Activated CD8-positive, alpha-beta T cell treated with anti-CD3 and anti-CD28 coated beads, Interleukin-2, amount 10 ng/mL, durations not matched to agents 7 days and 5 days (primary cell): ENCODE measurements at regions of chr2 and their contacts with region 1.

Region 1: GRCh38 chr2:238263204-238264071 is 23.6 kb upstream of the HES6 start:
- DNase-seq: peak; percentile 85
- ATAC-seq: peak; percentile 81
- H3K4me3 Mint-ChIP-seq: no peak overlapping the region
- H3K27ac Mint-ChIP-seq: no peak overlapping the region
- H3K4me1 Mint-ChIP-seq: peaks cover 5% of the 10 kb centered on the region
- H3K27me3 Mint-ChIP-seq: no peaks in the 10 kb centered on the region

Region 2: DNA sequence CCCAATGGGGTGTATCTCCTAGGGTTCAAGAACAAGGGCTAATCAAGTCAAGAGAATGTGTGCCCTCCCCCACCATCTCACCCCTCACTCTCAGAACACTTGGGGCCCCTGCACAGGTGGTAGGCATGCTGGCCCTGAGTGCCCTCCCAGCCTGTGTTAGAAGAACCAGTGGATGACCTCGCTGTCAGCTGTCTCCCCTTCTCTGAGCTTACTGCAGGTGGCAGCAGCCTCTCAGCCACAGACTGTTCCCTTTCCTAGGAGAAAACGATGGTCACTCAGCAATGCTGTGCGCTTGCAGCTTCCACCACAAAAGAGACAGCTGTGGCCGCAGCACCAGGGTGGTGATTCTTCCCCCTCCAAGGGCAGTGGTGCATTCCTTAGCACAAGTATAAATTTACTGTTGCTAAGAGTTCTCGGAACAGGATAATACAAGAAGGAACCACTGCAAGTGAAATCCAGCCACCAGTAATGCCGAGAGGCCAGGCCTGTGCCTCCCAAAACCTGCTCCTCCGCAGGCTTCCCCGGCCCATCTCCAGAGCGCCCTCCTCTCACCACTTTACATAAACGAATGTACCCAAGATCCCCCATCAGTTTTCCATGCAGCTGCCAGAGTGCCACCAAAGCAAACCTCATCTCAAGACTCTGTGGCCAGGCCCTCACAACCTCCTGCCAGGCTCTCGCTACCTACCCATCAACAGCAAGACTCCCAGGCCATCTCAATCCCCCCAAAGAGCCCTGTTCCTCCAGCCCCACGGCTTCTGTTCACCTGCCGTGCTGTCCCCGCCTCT is 404.9 kb before region 1 on chr2:
- CTCF ChIA-PET with region 1: interaction called, 21 read pairs
- POLR2A ChIA-PET with region 1: no interaction called
- DNase-seq: peak; percentile 71
- ATAC-seq: peak; percentile 86
- H3K4me3 Mint-ChIP-seq: peak overlapping the region; percentile 64
- H3K27ac Mint-ChIP-seq: no peak overlapping the region
- H3K4me1 Mint-ChIP-seq: peaks cover 20% of the 10 kb centered on the region
- H3K27me3 Mint-ChIP-seq: peaks cover 56% of the 10 kb centered on the region

Region 3: DNA sequence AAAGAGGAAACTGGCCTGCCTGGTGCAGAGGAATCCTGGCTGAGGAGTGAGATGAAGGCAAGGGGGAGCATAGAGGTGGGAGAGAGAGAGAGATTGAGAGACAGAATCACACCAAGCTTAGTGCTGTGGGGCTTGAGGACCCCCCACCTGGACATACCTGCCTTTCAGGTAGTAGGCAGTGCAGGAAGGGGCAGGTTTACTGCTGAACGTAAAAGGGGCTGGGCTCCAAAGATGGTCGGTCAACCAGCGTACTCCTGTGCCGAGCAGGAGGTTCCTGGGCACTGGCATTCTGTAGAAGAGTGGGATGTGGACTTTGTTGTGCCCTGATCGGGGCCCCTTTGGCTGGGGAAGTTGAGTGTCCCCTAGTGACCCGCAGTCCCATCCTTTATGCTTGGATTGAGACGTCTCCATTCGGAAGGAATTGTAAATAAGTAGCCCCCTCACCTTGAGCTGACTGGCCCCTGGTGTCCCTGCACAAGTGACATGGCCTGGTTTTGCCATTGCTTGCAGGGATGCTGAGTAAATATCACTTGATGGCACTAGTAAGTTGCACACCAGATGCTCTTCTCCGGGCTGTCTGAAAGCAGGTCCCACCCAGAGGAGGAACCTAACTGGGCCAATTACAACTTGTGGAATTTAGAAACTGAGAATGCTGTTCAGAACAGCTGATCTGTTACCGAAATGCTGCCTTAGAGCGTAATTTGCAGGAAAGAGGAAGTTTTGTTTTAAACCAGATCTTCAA is 295.1 kb before region 1 on chr2:
- CTCF ChIA-PET with region 1: interaction called, 16 read pairs
- POLR2A ChIA-PET with region 1: no interaction called
- DNase-seq: peak; percentile 78
- ATAC-seq: peak; percentile 49
- H3K4me3 Mint-ChIP-seq: peak overlapping the region; percentile 79
- H3K27ac Mint-ChIP-seq: peak overlapping the region; percentile 81
- H3K4me1 Mint-ChIP-seq: peaks cover 46% of the 10 kb centered on the region
- H3K27me3 Mint-ChIP-seq: no peaks in the 10 kb centered on the region

Region 4: GRCh38 chr2:238160206-238161109 is 103.0 kb before region 1 on chr2:
- CTCF ChIA-PET with region 1: interaction called, 19 read pairs
- POLR2A ChIA-PET with region 1: no interaction called
- DNase-seq: peak; percentile 51
- ATAC-seq: peak; percentile 25
- H3K4me3 Mint-ChIP-seq: no peak overlapping the region
- H3K27ac Mint-ChIP-seq: no peak overlapping the region
- H3K4me1 Mint-ChIP-seq: peaks cover 15% of the 10 kb centered on the region
- H3K27me3 Mint-ChIP-seq: peaks cover 26% of the 10 kb centered on the region

Region 5: DNA sequence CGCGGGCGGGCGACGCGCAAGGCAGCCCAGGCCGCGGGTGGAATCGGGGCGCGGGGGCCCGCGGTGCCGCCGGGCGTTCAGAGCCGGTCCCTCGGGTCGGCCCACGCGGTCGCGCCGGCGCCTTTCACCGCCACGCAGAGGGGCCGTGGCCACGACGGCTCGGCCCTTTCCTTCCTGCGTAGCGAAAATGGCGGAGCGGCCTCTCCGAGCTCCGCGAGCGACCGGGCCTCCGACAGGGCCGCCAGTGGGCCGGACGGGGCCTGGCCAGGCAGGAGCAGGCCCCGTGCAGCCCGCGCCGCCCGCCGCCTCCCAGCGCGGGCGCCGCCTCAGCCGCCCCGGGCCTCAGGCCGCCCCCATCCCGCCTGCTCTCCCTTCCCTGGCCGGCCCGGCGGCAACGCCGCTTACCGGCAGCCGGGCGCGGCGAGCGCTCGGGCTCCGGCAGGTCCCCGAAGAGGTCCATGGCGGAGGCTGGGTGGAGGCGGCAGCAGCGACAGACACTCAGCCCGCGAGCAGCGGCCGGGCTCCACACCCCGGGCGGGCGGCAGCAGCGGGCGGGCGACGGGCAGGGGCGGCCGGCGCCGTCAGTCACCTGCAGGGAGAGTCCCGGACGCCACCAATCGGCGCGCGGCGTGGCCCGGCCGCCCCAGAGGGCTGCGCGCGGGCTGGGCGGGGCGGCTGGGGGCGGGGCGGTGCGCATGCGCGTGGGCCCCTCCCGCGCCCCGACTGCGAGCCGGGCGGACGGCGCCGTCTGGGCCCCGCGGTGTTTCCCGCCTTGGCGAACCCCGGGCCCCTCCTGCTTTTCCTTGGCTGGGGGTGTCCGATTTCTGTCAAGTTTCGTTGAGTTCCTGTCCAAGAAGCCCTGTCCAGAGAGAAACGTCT is 60.1 kb before region 1 on chr2 and contains the start of gene ILKAP:
- CTCF ChIA-PET with region 1: interaction called, 17 read pairs
- POLR2A ChIA-PET with region 1: no interaction called
- DNase-seq: peak; percentile 88
- ATAC-seq: peak; percentile 98
- H3K4me3 Mint-ChIP-seq: peak within 1 kb of the TSS; percentile 86
- H3K27ac Mint-ChIP-seq: peak within 1 kb of the TSS; percentile 83
- H3K4me1 Mint-ChIP-seq: peaks cover 46% of the 10 kb centered on the region
- H3K27me3 Mint-ChIP-seq: no peaks in the 10 kb centered on the region
- total RNA-seq, gene ILKAP: 58.3 to 62.7 TPM

Region 6: DNA sequence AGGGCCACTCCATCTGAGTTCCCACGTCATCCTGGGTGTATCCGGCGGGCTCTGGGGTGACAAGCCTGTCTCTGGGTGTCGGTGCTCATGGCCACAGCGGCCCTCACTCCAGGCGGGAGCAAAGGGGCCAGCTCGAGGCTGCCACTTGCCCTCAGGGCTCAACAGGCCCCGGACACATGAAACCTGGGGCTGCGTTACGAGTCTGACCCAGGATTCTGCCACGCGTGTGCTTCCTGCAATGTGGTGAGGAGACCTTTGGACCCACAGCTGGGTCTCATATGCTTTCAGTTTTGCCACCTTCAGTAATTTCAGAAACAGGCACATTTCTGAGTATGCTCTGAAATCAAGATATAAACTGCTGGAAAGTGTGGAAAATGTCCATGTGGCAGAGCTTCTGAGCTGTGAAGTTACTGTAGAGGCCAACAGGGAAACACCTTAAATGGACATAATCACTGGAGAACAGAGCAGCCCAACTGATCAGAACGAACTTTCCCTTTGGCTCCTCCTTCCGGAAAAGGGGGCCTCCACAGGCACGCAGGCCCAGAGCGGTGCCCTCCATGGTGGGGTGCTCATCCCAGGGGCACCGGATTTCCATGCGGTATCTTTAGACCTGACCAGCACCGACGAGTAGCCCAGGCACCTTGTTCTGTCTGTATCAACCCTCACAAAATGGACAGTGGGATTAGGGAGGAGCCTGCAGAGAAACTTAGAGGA is 10.9 kb after region 1 on chr2:
- CTCF ChIA-PET with region 1: interaction called, 15 read pairs
- POLR2A ChIA-PET with region 1: interaction called, 3 read pairs
- DNase-seq: no peak
- ATAC-seq: no peak
- H3K4me3 Mint-ChIP-seq: no peak overlapping the region
- H3K27ac Mint-ChIP-seq: no peak overlapping the region
- H3K4me1 Mint-ChIP-seq: no peaks in the 10 kb centered on the region
- H3K27me3 Mint-ChIP-seq: no peaks in the 10 kb centered on the region

Region 7: GRCh38 chr2:238285653-238286089 is 22.2 kb after region 1 on chr2:
- CTCF ChIA-PET with region 1: interaction called, 19 read pairs
- POLR2A ChIA-PET with region 1: interaction called, 6 read pairs
- DNase-seq: no peak
- ATAC-seq: no peak
- H3K4me3 Mint-ChIP-seq: no peak overlapping the region
- H3K27ac Mint-ChIP-seq: no peak overlapping the region
- H3K4me1 Mint-ChIP-seq: peaks cover 43% of the 10 kb centered on the region
- H3K27me3 Mint-ChIP-seq: no peaks in the 10 kb centered on the region